ENCODE measurements at regions of chr15 and their contacts with region 1.

Region 1: GRCh38 chr15:73927476-73928240 is 1.4 kb downstream of the LOXL1 start:
- DNase-seq: peak; percentile 83
- ATAC-seq: peak; percentile 86
- H3K4me3 Mint-ChIP-seq: peak overlapping the region; percentile 73
- H3K27ac Mint-ChIP-seq: peak overlapping the region; percentile 89
- H3K4me1 Mint-ChIP-seq: peaks cover 70% of the 10 kb centered on the region
- H3K27me3 Mint-ChIP-seq: no peaks in the 10 kb centered on the region

Region 2: GRCh38 chr15:72057548-72058091 is 1870.0 kb before region 1 on chr15:
- CTCF ChIA-PET with region 1: no interaction called
- DNase-seq: no peak
- ATAC-seq: no peak
- H3K4me3 Mint-ChIP-seq: no peak overlapping the region
- H3K27ac Mint-ChIP-seq: no peak overlapping the region
- H3K4me1 Mint-ChIP-seq: peaks cover 5% of the 10 kb centered on the region
- H3K27me3 Mint-ChIP-seq: no peaks in the 10 kb centered on the region

Region 3: GRCh38 chr15:73809733-73810501 is 117.7 kb before region 1 on chr15:
- CTCF ChIA-PET with region 1: no interaction called
- DNase-seq: no peak
- ATAC-seq: no peak
- H3K4me3 Mint-ChIP-seq: no peak overlapping the region
- H3K27ac Mint-ChIP-seq: no peak overlapping the region
- H3K4me1 Mint-ChIP-seq: no peaks in the 10 kb centered on the region
- H3K27me3 Mint-ChIP-seq: peaks cover 12% of the 10 kb centered on the region

Region 4: GRCh38 chr15:73856458-73857192 is 71.0 kb before region 1 on chr15:
- CTCF ChIA-PET with region 1: no interaction called
- DNase-seq: no peak
- ATAC-seq: no peak
- H3K4me3 Mint-ChIP-seq: no peak overlapping the region
- H3K27ac Mint-ChIP-seq: no peak overlapping the region
- H3K4me1 Mint-ChIP-seq: no peaks in the 10 kb centered on the region
- H3K27me3 Mint-ChIP-seq: peaks cover 35% of the 10 kb centered on the region

Region 5: DNA sequence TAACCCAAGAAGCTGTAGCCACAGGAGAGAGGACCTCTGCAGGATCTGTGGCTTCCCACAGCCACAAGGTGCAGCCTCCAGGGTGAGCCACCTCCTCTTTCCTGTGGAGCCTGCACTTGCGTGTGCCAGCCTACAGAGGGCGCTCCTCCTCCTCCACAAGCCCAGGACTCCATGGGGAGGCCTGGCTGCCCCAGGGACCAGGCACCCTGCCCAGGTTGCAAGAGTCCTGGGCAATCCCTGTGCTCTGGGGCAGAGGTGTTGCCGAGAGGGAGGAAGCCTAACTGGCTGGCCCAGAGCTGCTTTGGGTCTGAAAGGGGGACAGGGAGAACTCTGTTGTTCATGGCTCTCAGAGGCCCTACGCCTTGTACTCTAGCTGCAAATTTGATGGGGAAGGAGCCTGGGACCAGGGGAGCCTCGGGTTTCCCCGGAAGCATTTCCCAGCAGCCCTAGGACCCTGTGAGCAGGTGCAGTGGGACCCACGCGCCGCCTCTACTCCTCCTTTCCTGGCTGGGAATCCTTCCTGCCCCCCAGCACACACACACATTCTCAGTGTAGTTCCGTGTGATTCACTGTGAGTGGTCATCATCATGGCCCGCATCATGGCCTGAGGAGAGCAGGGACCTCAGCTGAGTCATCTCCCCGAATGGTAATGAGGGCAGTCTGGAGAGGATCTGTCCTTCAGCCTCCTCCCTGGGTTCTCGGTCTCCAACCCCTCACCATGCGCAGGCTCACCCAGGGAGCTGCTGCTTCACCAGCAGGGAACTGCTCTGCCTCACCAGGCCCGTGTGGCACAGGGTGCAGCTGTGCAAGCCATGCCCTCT is 30.0 kb before region 1 on chr15:
- CTCF ChIA-PET with region 1: interaction called, 64 read pairs
- DNase-seq: peak; percentile 90
- ATAC-seq: peak; percentile 94
- H3K4me3 Mint-ChIP-seq: no peak overlapping the region
- H3K27ac Mint-ChIP-seq: no peak overlapping the region
- H3K4me1 Mint-ChIP-seq: peaks cover 15% of the 10 kb centered on the region
- H3K27me3 Mint-ChIP-seq: peaks cover 10% of the 10 kb centered on the region

Region 6: GRCh38 chr15:73914145-73914544 is 13.5 kb before region 1 on chr15:
- CTCF ChIA-PET with region 1: interaction called, 118 read pairs
- DNase-seq: peak; percentile 69
- ATAC-seq: peak; percentile 94
- H3K4me3 Mint-ChIP-seq: no peak overlapping the region
- H3K27ac Mint-ChIP-seq: peak overlapping the region; percentile 72
- H3K4me1 Mint-ChIP-seq: peaks cover 33% of the 10 kb centered on the region
- H3K27me3 Mint-ChIP-seq: no peaks in the 10 kb centered on the region

Region 7: DNA sequence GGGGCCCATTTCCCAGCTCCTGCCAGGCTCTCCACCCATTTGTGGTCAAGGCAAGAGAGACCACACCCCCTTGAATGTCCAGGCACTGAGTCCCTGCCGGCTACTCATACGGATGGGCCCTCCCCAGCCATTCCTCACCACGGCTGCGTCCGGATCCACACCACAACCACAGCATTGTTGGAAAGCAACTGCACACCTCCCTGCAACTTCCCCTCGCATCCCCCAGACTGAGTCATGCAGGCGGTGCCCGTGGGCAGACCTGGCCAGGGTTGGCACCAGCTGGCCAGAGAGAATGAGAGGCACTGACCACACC is 29.0 kb after region 1 on chr15:
- CTCF ChIA-PET with region 1: interaction called, 29 read pairs
- DNase-seq: no peak
- ATAC-seq: no peak
- H3K4me3 Mint-ChIP-seq: no peak overlapping the region
- H3K27ac Mint-ChIP-seq: no peak overlapping the region
- H3K4me1 Mint-ChIP-seq: peaks cover 39% of the 10 kb centered on the region
- H3K27me3 Mint-ChIP-seq: peaks cover 3% of the 10 kb centered on the region

Region 8: DNA sequence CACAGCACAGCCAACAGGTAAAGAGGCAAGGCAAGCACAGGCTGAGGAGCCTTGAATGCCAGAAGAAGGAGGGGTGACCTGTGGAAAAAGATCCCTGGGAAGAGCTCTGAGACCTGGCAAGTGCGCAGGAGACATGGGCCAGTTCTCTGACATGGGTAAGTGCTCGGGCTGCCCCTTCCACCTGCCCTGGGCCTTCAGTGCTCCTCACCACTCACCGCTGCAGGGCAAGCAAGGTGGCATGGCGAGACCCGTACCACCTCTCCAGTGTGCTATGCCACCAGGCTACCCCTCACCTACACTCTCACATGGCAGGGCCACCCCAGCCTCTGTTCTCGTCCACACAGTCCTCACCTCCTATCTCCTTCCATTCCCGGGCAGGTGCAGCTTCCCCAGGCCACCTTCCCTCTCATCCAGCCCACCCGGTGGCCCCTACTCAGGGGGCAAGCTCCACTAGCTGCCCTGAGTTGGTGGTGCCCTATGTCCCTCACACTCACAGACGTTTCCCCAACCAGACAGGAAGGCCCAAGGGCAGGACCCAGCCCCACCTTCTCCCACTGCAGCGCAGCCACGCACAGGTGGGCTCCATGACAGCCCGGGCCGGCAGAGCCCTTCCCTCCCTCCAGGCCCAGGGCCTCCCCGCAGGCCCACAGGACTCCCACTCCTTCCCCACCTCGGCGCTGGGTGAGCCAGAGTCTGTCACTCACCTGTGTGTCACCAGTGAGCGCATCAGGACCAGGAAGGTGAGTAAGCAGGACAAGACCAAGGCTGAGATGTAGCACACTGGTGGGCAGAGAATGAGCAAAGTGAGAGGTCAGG is 256.8 kb after region 1 on chr15:
- CTCF ChIA-PET with region 1: no interaction called
- DNase-seq: no peak
- ATAC-seq: no peak
- H3K4me3 Mint-ChIP-seq: no peak overlapping the region
- H3K27ac Mint-ChIP-seq: no peak overlapping the region
- H3K4me1 Mint-ChIP-seq: no peaks in the 10 kb centered on the region
- H3K27me3 Mint-ChIP-seq: peaks cover 2% of the 10 kb centered on the region

Measured in activated CD8-positive, alpha-beta memory T cell treated with anti-CD3 and anti-CD28 coated beads, Interleukin-2, amount 10 ng/mL, durations not matched to agents 7 days and 5 days (primary cell).